ENCODE measurements at regions of chr5 and their contacts with region 1.

Region 1: GRCh38 chr5:317086-317811 is 4.3 kb upstream of the AHRR start:
- H3K4me3 Mint-ChIP-seq: no peak overlapping the region
- H3K27ac Mint-ChIP-seq: no peak overlapping the region
- H3K4me1 Mint-ChIP-seq: peaks cover 31% of the 10 kb centered on the region
- H3K27me3 Mint-ChIP-seq: peaks cover 23% of the 10 kb centered on the region

Region 2: GRCh38 chr5:270340-270739 is 46.9 kb before region 1 on chr5:
- intact Hi-C with region 1: no loop called
- H3K4me3 Mint-ChIP-seq: peak overlapping the region; percentile 95
- H3K27ac Mint-ChIP-seq: peak overlapping the region; percentile 96
- H3K4me1 Mint-ChIP-seq: peaks cover 32% of the 10 kb centered on the region
- H3K27me3 Mint-ChIP-seq: no peaks in the 10 kb centered on the region

Region 3: GRCh38 chr5:435961-436640 is 118.9 kb after region 1 on chr5:
- intact Hi-C with region 1: loop called (anchors 2 kb)
- H3K4me3 Mint-ChIP-seq: no peak overlapping the region
- H3K27ac Mint-ChIP-seq: no peak overlapping the region
- H3K4me1 Mint-ChIP-seq: peaks cover 41% of the 10 kb centered on the region
- H3K27me3 Mint-ChIP-seq: no peaks in the 10 kb centered on the region

Region 4: GRCh38 chr5:543825-544674 is 226.8 kb after region 1 on chr5:
- intact Hi-C with region 1: loop called (anchors 5 kb)
- H3K4me3 Mint-ChIP-seq: no peak overlapping the region
- H3K27ac Mint-ChIP-seq: no peak overlapping the region
- H3K4me1 Mint-ChIP-seq: peaks cover 47% of the 10 kb centered on the region
- H3K27me3 Mint-ChIP-seq: peaks cover 86% of the 10 kb centered on the region

Region 5: DNA sequence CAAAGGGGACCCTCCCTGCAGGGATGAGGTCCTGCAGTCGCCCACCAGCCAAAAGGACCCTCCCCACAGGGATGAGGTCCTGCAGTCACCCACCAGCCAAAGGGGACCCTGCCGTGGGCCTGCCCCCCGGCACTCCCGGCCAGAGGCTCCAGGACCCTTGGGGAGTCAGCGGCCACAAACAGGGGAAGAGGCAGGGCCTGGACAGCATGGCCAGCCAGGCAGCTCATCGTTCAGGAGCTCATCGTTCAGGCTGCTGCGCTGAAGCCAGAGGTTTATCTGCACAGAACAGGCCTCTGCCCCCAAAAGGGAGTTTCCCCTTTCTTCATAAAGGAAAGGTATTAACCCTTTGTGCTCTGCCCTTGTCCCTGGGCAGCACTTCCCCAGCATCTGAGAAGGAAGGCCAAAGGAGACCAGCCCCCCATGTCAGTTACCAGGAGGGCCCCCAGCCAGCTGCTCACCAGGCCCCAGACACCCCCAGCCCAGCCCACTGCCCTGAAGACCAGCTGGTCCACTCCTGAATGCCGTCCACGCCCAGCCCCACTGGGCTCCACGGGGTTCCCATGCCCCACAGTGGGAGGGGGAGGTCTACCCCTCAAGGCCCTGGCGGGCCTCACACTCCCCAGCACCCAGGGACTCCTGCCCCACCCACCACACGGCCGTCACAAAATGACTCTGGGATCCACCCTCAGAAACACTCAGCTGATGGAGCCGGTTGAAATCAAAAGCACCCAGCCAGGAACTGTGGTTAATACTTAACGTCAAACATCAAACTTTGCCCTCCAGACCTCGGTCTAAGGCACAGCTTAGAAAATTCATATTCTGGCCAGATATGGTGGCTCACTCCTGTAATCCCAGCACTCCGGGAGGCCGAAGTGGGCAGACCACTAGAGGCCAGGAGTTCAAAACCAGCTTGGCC is 788.4 kb after region 1 on chr5:
- intact Hi-C with region 1: no loop called
- H3K4me3 Mint-ChIP-seq: peak overlapping the region; percentile 76
- H3K27ac Mint-ChIP-seq: peak overlapping the region; percentile 91
- H3K4me1 Mint-ChIP-seq: peaks cover 98% of the 10 kb centered on the region
- H3K27me3 Mint-ChIP-seq: no peaks in the 10 kb centered on the region